Naive thymus-derived CD4-positive, alpha-beta T cell (primary cell): ENCODE measurements at regions of chr1 and their contacts with region 1.

Region 1: DNA sequence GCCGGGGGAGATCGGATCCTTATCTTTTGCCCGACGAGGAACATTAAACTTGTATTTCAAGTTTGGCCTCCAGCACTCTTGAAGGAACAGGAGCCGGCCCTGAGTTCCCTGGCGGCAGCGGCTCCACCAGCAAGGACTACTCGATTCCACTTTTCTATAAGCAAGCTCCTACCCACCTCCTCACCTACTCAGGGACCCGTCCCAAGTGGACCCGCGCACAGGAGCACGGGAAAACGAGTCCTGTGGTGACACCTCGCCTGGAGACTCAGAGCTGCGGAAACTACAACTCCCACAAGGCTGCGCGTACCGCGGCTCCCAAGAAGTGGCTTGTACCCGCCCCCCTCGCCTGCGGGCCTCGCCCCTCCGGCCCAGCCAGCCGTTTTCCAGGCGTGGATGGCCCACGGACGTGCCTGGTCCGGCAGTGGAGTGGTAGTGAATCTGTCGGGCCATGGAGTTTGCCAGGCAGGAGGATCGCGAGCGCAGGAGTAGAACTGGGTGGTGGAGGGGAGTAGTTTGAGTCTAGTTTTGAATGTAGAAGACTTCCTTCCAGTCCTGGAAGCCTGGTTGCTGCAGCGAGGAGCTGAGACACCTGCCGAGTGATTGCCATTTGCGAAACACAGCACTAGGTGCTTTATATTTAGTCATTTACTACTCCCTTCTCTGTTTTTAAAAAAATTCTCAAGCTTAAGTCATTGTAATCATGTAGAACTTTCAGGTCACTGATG is at the start of gene ACP6:
- DNase-seq: peak; percentile 61 to 86 (median 82)
- ATAC-seq: peak; percentile 98
- H3K4me3 ChIP-seq: peak within 1 kb of the TSS; percentile 78
- H3K4me3 Mint-ChIP-seq: peak within 1 kb of the TSS; percentile 93 to 98 (median 97)
- H3K27ac ChIP-seq: peak within 1 kb of the TSS; percentile 69
- H3K27ac Mint-ChIP-seq: peak within 1 kb of the TSS; percentile 83 to 94 (median 89)
- H3K4me1 ChIP-seq: peaks cover 0 to 7% of the 10 kb centered on the region in 2 donors
- H3K4me1 Mint-ChIP-seq: peaks cover 15 to 38% (median 29%) of the 10 kb centered on the region in 7 donors
- H3K27me3 ChIP-seq: no peaks in the 10 kb centered on the region
- H3K27me3 Mint-ChIP-seq: peaks cover 0 to 27% (median 12%) of the 10 kb centered on the region in 5 donors
- total RNA-seq, gene ACP6: 10.3 to 22.4 (median 16.6) TPM

Region 2: GRCh38 chr1:147647796-147648633 is 22.5 kb before region 1 on chr1:
- CTCF ChIA-PET with region 1: no interaction called
- POLR2A ChIA-PET with region 1: interaction called, 4 read pairs
- intact Hi-C with region 1: loop called in 1 of 2 experiments (anchors 1 kb)
- DNase-seq: peak in 5 of 9 donors; percentile 7 to 47 (median 37)
- ATAC-seq: peak; percentile 91
- H3K4me3 ChIP-seq: peak overlapping the region; percentile 14
- H3K4me3 Mint-ChIP-seq: peak overlapping the region in 8 of 10 donors; percentile 36 to 83 (median 52)
- H3K27ac ChIP-seq: no peak overlapping the region
- H3K27ac Mint-ChIP-seq: peak overlapping the region; percentile 13 to 82 (median 58)
- H3K4me1 ChIP-seq: peaks cover 36 to 43% of the 10 kb centered on the region in 2 donors
- H3K4me1 Mint-ChIP-seq: peaks cover 16 to 63% (median 46%) of the 10 kb centered on the region in 7 donors
- H3K27me3 ChIP-seq: no peaks in the 10 kb centered on the region
- H3K27me3 Mint-ChIP-seq: no peaks in the 10 kb centered on the region

Region 3: GRCh38 chr1:147700042-147701006 is 29.8 kb after region 1 on chr1:
- CTCF ChIA-PET with region 1: no interaction called
- POLR2A ChIA-PET with region 1: no interaction called
- intact Hi-C with region 1: loop called (anchors 1 kb)
- DNase-seq: peak; percentile 16 to 66 (median 58)
- ATAC-seq: peak; percentile 91
- H3K4me3 ChIP-seq: no peak overlapping the region
- H3K4me3 Mint-ChIP-seq: peak overlapping the region in 9 of 10 donors; percentile 18 to 77 (median 62)
- H3K27ac ChIP-seq: peak overlapping the region; percentile 29
- H3K27ac Mint-ChIP-seq: peak overlapping the region in 7 of 9 donors; percentile 15 to 78 (median 60)
- H3K4me1 ChIP-seq: peaks cover 0 to 7% of the 10 kb centered on the region in 2 donors
- H3K4me1 Mint-ChIP-seq: peaks cover 6 to 17% (median 15%) of the 10 kb centered on the region in 7 donors
- H3K27me3 ChIP-seq: no peaks in the 10 kb centered on the region
- H3K27me3 Mint-ChIP-seq: peaks cover 4 to 31% (median 11%) of the 10 kb centered on the region in 5 donors

Region 4: DNA sequence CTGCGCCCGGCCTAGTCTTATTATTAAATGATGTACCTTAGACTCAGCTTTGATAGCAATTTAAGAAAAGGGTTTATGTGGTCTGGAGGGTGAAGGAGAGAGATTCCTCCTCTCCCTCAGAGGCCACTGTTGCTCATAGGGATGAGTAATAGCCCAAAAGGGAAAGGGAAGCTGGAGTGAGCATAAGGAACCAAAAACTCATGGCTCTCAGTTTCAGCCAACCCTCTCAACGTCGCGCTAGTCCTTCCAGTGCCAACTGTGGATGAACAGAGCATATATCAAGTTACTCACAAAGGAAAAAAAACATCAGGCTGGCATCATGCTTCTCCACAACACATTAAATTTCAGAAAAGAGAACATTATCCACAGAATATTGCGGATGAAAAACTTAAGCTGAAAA is 249.4 kb after region 1 on chr1:
- CTCF ChIA-PET with region 1: no interaction called
- POLR2A ChIA-PET with region 1: no interaction called
- intact Hi-C with region 1: no loop called
- DNase-seq: no peak
- ATAC-seq: no peak
- H3K4me3 ChIP-seq: no peak overlapping the region
- H3K4me3 Mint-ChIP-seq: no peak overlapping the region
- H3K27ac ChIP-seq: no peak overlapping the region
- H3K27ac Mint-ChIP-seq: no peak overlapping the region
- H3K4me1 ChIP-seq: no peaks in the 10 kb centered on the region
- H3K4me1 Mint-ChIP-seq: peaks cover 0 to 2% (median 0%) of the 10 kb centered on the region in 7 donors
- H3K27me3 ChIP-seq: peaks cover 0 to 7% of the 10 kb centered on the region in 2 donors
- H3K27me3 Mint-ChIP-seq: peaks cover 0 to 39% (median 19%) of the 10 kb centered on the region in 5 donors